ENCODE measurements at regions of chr10 and their contacts with region 1.

Region 1: DNA sequence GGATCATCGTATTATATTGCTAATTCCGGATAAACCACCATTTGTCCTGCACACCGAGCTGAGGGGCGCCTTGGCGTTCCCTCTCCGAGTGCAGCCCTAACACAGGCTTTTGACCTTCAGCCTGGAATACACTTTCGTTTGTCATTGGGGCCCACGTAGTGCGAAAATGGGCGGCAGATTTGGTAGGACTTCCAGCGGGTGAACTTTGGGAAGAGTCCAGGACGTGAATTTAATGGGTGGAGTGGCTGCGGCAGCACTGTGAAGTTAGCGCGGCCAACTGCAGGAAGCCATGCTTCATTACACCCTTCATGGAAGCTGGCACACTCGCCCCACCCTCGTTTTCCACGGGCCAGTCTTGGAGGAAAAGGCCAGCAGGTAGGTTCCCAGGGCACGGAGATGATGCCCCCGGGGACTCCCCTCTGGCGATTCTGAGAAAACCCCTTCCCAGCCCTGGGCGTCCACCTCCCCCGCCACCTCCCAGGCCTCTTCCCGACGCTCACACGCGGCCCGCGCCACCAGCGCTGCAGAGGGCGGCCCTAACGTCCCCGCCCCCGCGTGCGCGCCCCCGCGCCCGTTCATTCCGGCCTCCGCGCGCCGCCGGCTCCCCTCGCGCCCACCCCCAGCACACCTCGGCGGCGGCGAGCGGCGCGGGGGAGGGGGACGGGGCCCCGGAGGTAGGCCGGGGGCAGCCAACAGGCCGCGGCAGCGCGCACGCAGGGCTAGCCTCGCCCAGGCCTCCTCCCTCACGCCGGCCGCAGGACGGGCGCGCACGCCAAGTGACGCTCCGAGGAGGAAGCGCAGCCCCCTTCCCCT is at the start of gene MLLT10:
- DNase-seq: peak; percentile 96
- H3K4me3 ChIP-seq: peak within 1 kb of the TSS; percentile 75
- H3K27ac ChIP-seq: peak within 1 kb of the TSS; percentile 84
- H3K4me1 ChIP-seq: peaks cover 10% of the 10 kb centered on the region
- H3K27me3 ChIP-seq: no peaks in the 10 kb centered on the region
- total RNA-seq, gene MLLT10: 16.1 and 19.8 TPM in 2 replicates

Region 2: GRCh38 chr10:21926949-21927348 is 393.3 kb after region 1 on chr10:
- in situ Hi-C with region 1: loop called (anchors 25 kb)
- DNase-seq: peak; percentile 93
- H3K4me3 ChIP-seq: peak overlapping the region; percentile 50
- H3K27ac ChIP-seq: peak overlapping the region; percentile 60
- H3K4me1 ChIP-seq: peaks cover 37% of the 10 kb centered on the region
- H3K27me3 ChIP-seq: no peaks in the 10 kb centered on the region

Region 3: GRCh38 chr10:22356333-22356873 is 822.7 kb after region 1 on chr10:
- in situ Hi-C with region 1: no loop called
- DNase-seq: no peak
- H3K4me3 ChIP-seq: no peak overlapping the region
- H3K27ac ChIP-seq: no peak overlapping the region
- H3K4me1 ChIP-seq: no peaks in the 10 kb centered on the region
- H3K27me3 ChIP-seq: no peaks in the 10 kb centered on the region